CD8-positive, alpha-beta memory T cell (primary cell): ENCODE measurements at regions of chr11 and their contacts with region 1.

Region 1: GRCh38 chr11:17978553-17979287 is 34.1 kb downstream of the SERGEF start:
- DNase-seq: no peak
- H3K4me3 ChIP-seq: no peak overlapping the region
- H3K4me3 Mint-ChIP-seq: no peak overlapping the region
- H3K27ac ChIP-seq: no peak overlapping the region
- H3K27ac Mint-ChIP-seq: no peak overlapping the region
- H3K4me1 ChIP-seq: no peaks in the 10 kb centered on the region
- H3K4me1 Mint-ChIP-seq: peaks cover 4 to 6% (median 4%) of the 10 kb centered on the region in 3 donors
- H3K27me3 ChIP-seq: no peaks in the 10 kb centered on the region
- H3K27me3 Mint-ChIP-seq: no peaks in the 10 kb centered on the region

Region 2: GRCh38 chr11:17839973-17840611 is 138.6 kb before region 1 on chr11:
- CTCF ChIA-PET with region 1: no interaction called
- POLR2A ChIA-PET with region 1: no interaction called
- DNase-seq: no peak
- H3K4me3 ChIP-seq: no peak overlapping the region
- H3K4me3 Mint-ChIP-seq: no peak overlapping the region
- H3K27ac ChIP-seq: no peak overlapping the region
- H3K27ac Mint-ChIP-seq: no peak overlapping the region
- H3K4me1 ChIP-seq: no peaks in the 10 kb centered on the region
- H3K4me1 Mint-ChIP-seq: no peaks in the 10 kb centered on the region
- H3K27me3 ChIP-seq: no peaks in the 10 kb centered on the region
- H3K27me3 Mint-ChIP-seq: no peaks in the 10 kb centered on the region

Region 3: DNA sequence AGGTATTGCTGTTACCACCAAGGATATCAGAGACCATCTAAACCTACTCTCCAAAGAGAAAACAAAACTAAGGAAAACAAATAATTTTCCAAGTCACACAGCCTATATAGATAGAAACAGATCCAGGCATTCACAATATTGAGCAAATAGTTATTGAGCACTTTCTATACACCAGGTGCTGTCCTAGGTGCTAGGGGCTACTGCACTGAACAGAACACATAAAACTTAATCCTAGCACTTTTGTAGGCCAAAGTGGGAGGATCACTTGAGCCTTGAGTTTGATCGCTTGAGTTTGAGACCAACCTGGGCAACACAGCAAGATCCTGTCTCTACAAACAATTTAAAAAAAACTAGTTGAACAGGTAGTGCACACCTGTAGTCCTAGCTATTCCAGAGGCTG is 10.5 kb before region 1 on chr11:
- CTCF ChIA-PET with region 1: interaction called, 12 read pairs
- POLR2A ChIA-PET with region 1: no interaction called
- DNase-seq: no peak
- H3K4me3 ChIP-seq: no peak overlapping the region
- H3K4me3 Mint-ChIP-seq: no peak overlapping the region
- H3K27ac ChIP-seq: no peak overlapping the region
- H3K27ac Mint-ChIP-seq: peak overlapping the region in 1 of 8 donors; percentile 12
- H3K4me1 ChIP-seq: no peaks in the 10 kb centered on the region
- H3K4me1 Mint-ChIP-seq: peaks cover 0 to 5% (median 0%) of the 10 kb centered on the region in 3 donors
- H3K27me3 ChIP-seq: no peaks in the 10 kb centered on the region
- H3K27me3 Mint-ChIP-seq: no peaks in the 10 kb centered on the region

Region 4: DNA sequence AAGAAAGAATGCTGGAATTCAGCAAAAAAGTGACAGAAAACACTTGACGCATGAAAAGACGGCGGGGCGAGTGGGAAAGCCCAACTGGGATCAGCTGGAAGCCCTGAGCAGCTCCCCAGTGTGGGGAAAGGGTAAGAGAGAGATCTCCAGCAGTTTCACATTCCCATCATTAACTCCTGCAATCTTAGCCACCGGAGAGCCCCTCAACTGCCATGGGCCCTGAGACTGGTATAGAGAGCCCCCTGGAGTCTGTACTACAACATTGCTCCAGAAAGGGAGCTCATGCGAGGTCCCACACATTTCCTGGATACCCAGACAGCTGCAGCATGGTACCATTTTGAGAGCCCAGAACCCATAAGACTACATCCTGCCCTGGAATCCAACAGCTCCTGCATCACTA is 225.0 kb after region 1 on chr11:
- CTCF ChIA-PET with region 1: no interaction called
- POLR2A ChIA-PET with region 1: no interaction called
- DNase-seq: no peak
- H3K4me3 ChIP-seq: no peak overlapping the region
- H3K4me3 Mint-ChIP-seq: no peak overlapping the region
- H3K27ac ChIP-seq: no peak overlapping the region
- H3K27ac Mint-ChIP-seq: no peak overlapping the region
- H3K4me1 ChIP-seq: no peaks in the 10 kb centered on the region
- H3K4me1 Mint-ChIP-seq: no peaks in the 10 kb centered on the region
- H3K27me3 ChIP-seq: no peaks in the 10 kb centered on the region
- H3K27me3 Mint-ChIP-seq: peaks cover 38 to 66% of the 10 kb centered on the region in 2 donors